Activated CD8-positive, alpha-beta memory T cell treated with anti-CD3 and anti-CD28 coated beads, Interleukin-2, amount 10 ng/mL, durations not matched to agents 7 days and 5 days (primary cell): ENCODE measurements at regions of chr19 and their contacts with region 1.

Region 1: GRCh38 chr19:46189971-46190888 is 39.3 kb upstream of the IGFL1 start:
- DNase-seq: no peak
- ATAC-seq: no peak
- H3K4me3 Mint-ChIP-seq: no peak overlapping the region
- H3K27ac Mint-ChIP-seq: no peak overlapping the region
- H3K4me1 Mint-ChIP-seq: peaks cover under 1% of the 10 kb centered on the region
- H3K27me3 Mint-ChIP-seq: peaks cover 69% of the 10 kb centered on the region

Region 2: DNA sequence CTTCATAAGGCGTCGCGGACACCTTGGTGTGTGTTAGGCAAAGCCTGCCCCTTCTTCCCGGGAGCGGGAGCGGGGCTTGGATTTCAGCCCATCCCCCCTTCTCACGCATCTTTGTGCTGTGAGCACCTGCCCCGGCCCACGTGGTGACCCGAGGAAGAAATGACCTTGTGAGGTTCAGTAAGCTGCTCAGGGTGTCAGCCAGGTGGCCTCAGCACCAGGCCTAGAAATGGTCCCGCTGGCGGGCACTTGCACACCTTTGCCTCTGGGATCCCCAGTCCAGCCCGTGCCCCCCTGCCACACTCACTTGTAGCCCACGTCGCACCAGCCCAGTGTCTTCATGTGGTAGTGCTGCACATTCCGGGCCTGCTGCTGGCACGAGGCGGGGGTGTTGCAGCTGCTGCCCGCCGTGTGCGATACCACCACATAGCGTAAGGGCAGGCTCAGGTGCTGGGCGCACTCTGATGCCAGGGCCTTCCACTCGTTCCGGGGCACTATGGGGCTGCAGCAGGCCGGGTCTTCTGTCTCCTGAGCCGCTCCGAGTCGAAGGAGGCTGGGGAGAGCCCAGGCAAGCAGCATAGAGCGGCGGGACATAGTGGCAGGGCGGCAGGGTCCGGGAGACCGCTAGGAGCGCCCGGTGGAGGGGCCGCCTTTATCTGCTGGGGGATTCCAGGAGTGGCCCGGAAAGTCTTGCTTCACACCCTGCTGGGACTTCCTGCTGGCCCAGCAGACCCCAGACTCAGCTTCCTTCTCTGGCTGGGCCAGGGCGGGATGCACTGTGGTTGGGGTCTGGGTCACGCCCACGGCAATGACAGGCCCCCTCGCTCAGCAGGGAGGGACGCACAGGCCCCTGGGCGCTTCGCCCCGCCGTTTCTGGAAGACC is 167.6 kb before region 1 on chr19 and contains the start of gene PGLYRP1:
- CTCF ChIA-PET with region 1: interaction called, 24 read pairs
- DNase-seq: no peak
- ATAC-seq: no peak
- H3K4me3 Mint-ChIP-seq: no peak within 1 kb of the TSS
- H3K27ac Mint-ChIP-seq: no peak within 1 kb of the TSS
- H3K4me1 Mint-ChIP-seq: peaks cover 11% of the 10 kb centered on the region
- H3K27me3 Mint-ChIP-seq: peaks cover 39% of the 10 kb centered on the region
- total RNA-seq, gene PGLYRP1: not detected

Region 3: GRCh38 chr19:46319613-46320012 is 129.4 kb after region 1 on chr19:
- CTCF ChIA-PET with region 1: no interaction called
- DNase-seq: no peak
- ATAC-seq: no peak
- H3K4me3 Mint-ChIP-seq: no peak overlapping the region
- H3K27ac Mint-ChIP-seq: no peak overlapping the region
- H3K4me1 Mint-ChIP-seq: no peaks in the 10 kb centered on the region
- H3K27me3 Mint-ChIP-seq: no peaks in the 10 kb centered on the region